IMR-90 (cell line): ENCODE measurements at regions of chr5 and their contacts with region 1.

Region 1: GRCh38 chr5:67081261-67081660 is 115.3 kb downstream of the CD180 start:
- DNase-seq: no peak
- ATAC-seq: no peak
- H3K4me3 ChIP-seq: no peak overlapping the region
- H3K27ac ChIP-seq: no peak overlapping the region
- H3K4me1 ChIP-seq: peaks cover 2% of the 10 kb centered on the region; the same call in 1 of the 2 replicates
- H3K27me3 ChIP-seq: no peaks in the 10 kb centered on the region
- CTCF ChIP-seq: no peak
- POLR2A ChIP-seq: no peak
- RAD21 ChIP-seq: no peak

Region 2: GRCh38 chr5:66329078-66329477 is 752.2 kb before region 1 on chr5:
- CTCF ChIA-PET with region 1: no interaction called
- POLR2A ChIA-PET with region 1: no interaction called
- dilution Hi-C with region 1: no loop called
- in situ Hi-C with region 1: no loop called
- intact Hi-C with region 1: no loop called
- DNase-seq: no peak
- ATAC-seq: no peak
- H3K4me3 ChIP-seq: no peak overlapping the region
- H3K27ac ChIP-seq: no peak overlapping the region
- H3K4me1 ChIP-seq: no peaks in the 10 kb centered on the region
- H3K27me3 ChIP-seq: no peaks in the 10 kb centered on the region; the same call in 1 of the 2 replicates
- CTCF ChIP-seq: no peak
- POLR2A ChIP-seq: no peak
- RAD21 ChIP-seq: no peak

Region 3: GRCh38 chr5:66573733-66574132 is 507.5 kb before region 1 on chr5:
- CTCF ChIA-PET with region 1: no interaction called
- POLR2A ChIA-PET with region 1: interaction called, 21 read pairs
- dilution Hi-C with region 1: no loop called
- in situ Hi-C with region 1: no loop called
- intact Hi-C with region 1: no loop called
- DNase-seq: no peak
- ATAC-seq: no peak
- H3K4me3 ChIP-seq: no peak overlapping the region
- H3K27ac ChIP-seq: no peak overlapping the region
- H3K4me1 ChIP-seq: no peaks in the 10 kb centered on the region
- H3K27me3 ChIP-seq: no peaks in the 10 kb centered on the region
- CTCF ChIP-seq: no peak
- POLR2A ChIP-seq: no peak
- RAD21 ChIP-seq: no peak

Region 4: DNA sequence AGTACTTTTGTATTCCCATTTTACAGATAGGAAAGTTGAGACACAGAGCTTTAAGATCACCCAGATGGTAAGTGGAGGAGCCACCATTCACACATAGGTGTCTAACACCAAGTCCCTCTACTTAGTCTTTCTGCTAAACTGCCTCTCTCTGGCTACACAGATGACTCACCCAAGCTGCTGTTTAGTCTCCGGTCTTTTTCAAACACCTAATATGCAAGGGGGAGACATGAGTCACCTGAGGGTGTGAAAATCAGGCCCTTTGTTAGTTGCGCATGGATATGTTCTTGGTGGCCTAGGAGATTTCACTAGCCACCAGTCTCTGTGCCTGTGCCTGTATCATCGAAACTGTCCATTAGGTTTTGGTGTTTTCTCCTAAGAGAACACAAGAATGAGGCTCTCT is 367.3 kb before region 1 on chr5:
- CTCF ChIA-PET with region 1: no interaction called
- POLR2A ChIA-PET with region 1: no interaction called
- dilution Hi-C with region 1: no loop called
- in situ Hi-C with region 1: no loop called
- intact Hi-C with region 1: no loop called
- DNase-seq: no peak
- ATAC-seq: no peak
- H3K4me3 ChIP-seq: no peak overlapping the region
- H3K27ac ChIP-seq: no peak overlapping the region
- H3K4me1 ChIP-seq: no peaks in the 10 kb centered on the region
- H3K27me3 ChIP-seq: no peaks in the 10 kb centered on the region
- CTCF ChIP-seq: no peak
- POLR2A ChIP-seq: no peak
- RAD21 ChIP-seq: no peak

Region 5: DNA sequence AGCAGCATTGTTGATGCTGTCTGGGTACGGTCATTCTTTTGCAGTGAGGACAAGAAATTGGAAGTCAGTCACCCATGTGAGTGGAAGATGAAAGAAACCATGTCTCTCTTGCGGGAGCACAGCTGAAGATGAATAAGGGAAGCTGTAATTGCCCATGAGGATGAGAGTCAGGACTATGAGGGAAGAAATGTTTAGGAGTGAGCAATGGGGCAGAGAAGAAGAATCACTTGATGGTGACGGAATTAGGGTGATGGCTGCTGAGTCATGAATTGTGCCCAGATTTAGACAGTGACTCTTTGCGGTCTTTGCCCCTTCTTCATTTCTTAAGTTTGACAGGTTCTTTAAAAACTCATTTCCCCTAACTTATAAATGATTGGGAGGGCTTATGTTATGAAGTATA is 301.7 kb before region 1 on chr5:
- CTCF ChIA-PET with region 1: no interaction called
- POLR2A ChIA-PET with region 1: no interaction called
- dilution Hi-C with region 1: no loop called
- in situ Hi-C with region 1: no loop called
- intact Hi-C with region 1: no loop called
- DNase-seq: no peak
- ATAC-seq: no peak
- H3K4me3 ChIP-seq: no peak overlapping the region
- H3K27ac ChIP-seq: no peak overlapping the region
- H3K4me1 ChIP-seq: no peaks in the 10 kb centered on the region
- H3K27me3 ChIP-seq: no peaks in the 10 kb centered on the region
- CTCF ChIP-seq: no peak
- POLR2A ChIP-seq: no peak
- RAD21 ChIP-seq: no peak

Region 6: DNA sequence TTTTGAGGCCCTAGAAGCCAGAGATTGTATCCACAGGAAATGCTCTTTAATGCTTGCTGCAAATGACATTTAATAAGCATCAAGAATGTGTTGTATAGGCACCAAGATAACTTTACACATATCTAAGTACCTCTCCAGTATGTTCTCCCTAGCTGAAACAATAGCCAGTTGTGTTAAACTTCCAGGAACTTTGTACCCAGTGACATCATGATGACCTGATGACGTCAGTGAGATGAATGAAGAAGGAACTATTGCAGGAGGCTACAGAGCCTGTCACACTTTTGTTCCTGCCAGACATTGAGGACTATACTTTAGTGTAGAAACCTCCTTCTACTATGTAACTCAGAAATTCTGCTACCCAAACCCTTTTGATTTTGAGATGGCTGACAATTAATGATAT is 14.4 kb before region 1 on chr5:
- CTCF ChIA-PET with region 1: no interaction called
- POLR2A ChIA-PET with region 1: no interaction called
- dilution Hi-C with region 1: no loop called
- in situ Hi-C with region 1: no loop called
- intact Hi-C with region 1: loop called (anchors 2 kb)
- DNase-seq: peak; percentile 39
- ATAC-seq: no peak
- H3K4me3 ChIP-seq: no peak overlapping the region
- H3K27ac ChIP-seq: no peak overlapping the region
- H3K4me1 ChIP-seq: no peaks in the 10 kb centered on the region; the same call in 1 of the 2 replicates
- H3K27me3 ChIP-seq: no peaks in the 10 kb centered on the region
- CTCF ChIP-seq: no peak
- POLR2A ChIP-seq: no peak
- RAD21 ChIP-seq: no peak

Region 7: DNA sequence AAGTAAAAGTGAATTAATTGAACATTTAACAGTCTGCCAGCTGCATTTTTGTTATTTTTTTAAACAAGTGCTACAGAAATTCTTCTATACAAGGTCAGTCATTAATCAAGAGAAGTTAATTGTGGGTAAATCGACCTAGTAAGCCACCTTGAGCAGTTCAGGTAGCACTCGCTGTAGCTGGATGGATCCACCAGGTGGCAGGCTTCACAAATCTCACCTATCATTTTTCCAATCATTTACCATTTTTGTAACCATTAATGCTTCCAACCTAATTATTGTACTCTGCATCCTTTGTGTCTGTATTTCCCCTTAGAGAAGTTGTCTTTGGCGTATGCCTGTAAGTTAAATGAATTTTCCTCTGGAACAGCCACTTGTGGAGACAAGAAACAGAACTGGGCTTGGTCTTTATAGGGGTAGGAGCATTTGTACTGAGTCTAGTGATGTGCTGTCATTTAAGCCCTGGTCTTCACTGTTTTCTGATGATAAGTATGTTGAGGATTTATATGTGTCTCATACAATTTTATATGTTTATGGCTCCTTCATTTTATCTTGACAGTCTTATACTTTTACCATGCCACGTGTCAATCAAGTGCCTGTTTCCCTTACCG is 75.8 kb after region 1 on chr5:
- CTCF ChIA-PET with region 1: no interaction called
- POLR2A ChIA-PET with region 1: no interaction called
- dilution Hi-C with region 1: no loop called
- in situ Hi-C with region 1: no loop called
- intact Hi-C with region 1: no loop called
- DNase-seq: peak; percentile 32
- ATAC-seq: peak; percentile 40; the same call in 1 of the 2 replicates
- H3K4me3 ChIP-seq: no peak overlapping the region
- H3K27ac ChIP-seq: no peak overlapping the region
- H3K4me1 ChIP-seq: no peaks in the 10 kb centered on the region
- H3K27me3 ChIP-seq: no peaks in the 10 kb centered on the region
- CTCF ChIP-seq: peak; percentile 65
- POLR2A ChIP-seq: no peak
- RAD21 ChIP-seq: peak; percentile 57